Activated CD8-positive, alpha-beta T cell treated with anti-CD3 and anti-CD28 coated beads for 36 hours (primary cell): ENCODE measurements at regions of chr19 and their contacts with region 1.

Region 1: GRCh38 chr19:42108527-42109389 is 23.5 kb downstream of the POU2F2 start:
- DNase-seq: peak; percentile 95
- ATAC-seq: peak; percentile 99
- H3K4me3 Mint-ChIP-seq: no peak overlapping the region
- H3K27ac Mint-ChIP-seq: peak overlapping the region; percentile 44
- H3K4me1 Mint-ChIP-seq: peaks cover 50% of the 10 kb centered on the region
- H3K27me3 Mint-ChIP-seq: no peaks in the 10 kb centered on the region
- CTCF ChIP-seq: peak; percentile 100

Region 2: DNA sequence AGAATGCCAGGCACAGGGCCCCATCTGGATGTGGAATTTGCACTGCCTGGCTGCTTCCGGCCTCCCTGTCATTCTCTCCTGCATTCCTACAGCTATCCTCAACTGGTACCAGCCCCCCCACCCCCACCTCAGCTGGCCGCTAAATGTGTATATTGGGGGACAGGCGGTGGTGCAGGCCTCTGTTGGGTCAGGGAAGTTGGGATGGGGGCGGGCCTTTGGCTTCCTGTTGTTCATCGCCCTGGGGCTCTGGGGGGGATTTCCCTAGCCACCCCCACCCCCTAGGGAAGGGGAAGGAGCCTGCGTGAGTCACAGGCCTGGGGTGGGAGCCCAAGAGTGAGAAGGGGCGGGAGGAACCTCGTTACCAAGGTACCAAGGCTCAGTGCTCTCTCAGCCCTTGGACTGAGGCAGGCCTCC is 12.9 kb after region 1 on chr19:
- CTCF ChIA-PET with region 1: interaction called, 112 read pairs
- POLR2A ChIA-PET with region 1: interaction called, 4 read pairs
- intact Hi-C with region 1: no loop called
- DNase-seq: peak; percentile 93
- ATAC-seq: peak; percentile 69
- H3K4me3 Mint-ChIP-seq: peak overlapping the region; percentile 78
- H3K27ac Mint-ChIP-seq: peak overlapping the region; percentile 96
- H3K4me1 Mint-ChIP-seq: peaks cover 68% of the 10 kb centered on the region
- H3K27me3 Mint-ChIP-seq: no peaks in the 10 kb centered on the region
- CTCF ChIP-seq: no peak

Region 3: DNA sequence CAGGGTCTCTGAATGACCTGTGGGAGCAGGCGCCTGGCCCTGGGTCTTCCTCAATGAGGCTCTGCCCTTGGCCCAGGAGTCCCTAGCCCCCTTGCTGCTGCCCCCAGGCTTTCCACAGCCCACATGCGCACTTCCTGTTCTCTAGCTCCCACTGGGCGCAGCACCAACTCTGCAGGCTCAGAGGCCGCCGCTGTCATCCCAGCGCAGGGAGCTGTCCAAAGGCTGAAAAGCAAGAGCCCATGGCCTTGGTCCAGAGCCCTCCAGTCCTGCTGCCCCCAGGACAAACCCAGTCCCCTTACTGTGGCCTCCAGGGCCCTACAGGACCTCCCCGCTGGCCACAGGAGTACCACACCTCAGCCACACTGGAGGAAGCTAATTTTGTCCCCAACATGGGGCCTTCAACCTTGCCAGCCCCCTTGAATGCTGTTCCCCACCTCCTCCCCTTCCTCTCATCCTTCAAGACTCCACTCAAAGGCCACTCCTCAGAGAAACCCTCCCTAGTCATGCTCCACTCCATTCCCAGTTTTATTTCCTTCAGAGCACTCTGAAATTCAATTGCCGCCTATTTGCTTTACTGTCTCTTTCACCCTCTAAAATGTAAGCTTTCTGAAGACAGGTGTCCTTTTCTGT is 31.5 kb after region 1 on chr19:
- CTCF ChIA-PET with region 1: interaction called, 19 read pairs
- POLR2A ChIA-PET with region 1: no interaction called
- intact Hi-C with region 1: no loop called
- DNase-seq: peak; percentile 59
- ATAC-seq: peak; percentile 79
- H3K4me3 Mint-ChIP-seq: no peak overlapping the region
- H3K27ac Mint-ChIP-seq: no peak overlapping the region
- H3K4me1 Mint-ChIP-seq: peaks cover 5% of the 10 kb centered on the region
- H3K27me3 Mint-ChIP-seq: no peaks in the 10 kb centered on the region
- CTCF ChIP-seq: no peak

Region 4: GRCh38 chr19:42184401-42184861 is 75.7 kb after region 1 on chr19:
- CTCF ChIA-PET with region 1: interaction called, 42 read pairs
- POLR2A ChIA-PET with region 1: no interaction called
- intact Hi-C with region 1: loop called (anchors 1 kb)
- DNase-seq: peak; percentile 83
- ATAC-seq: peak; percentile 85
- H3K4me3 Mint-ChIP-seq: no peak overlapping the region
- H3K27ac Mint-ChIP-seq: peak overlapping the region; percentile 36
- H3K4me1 Mint-ChIP-seq: peaks cover 21% of the 10 kb centered on the region
- H3K27me3 Mint-ChIP-seq: no peaks in the 10 kb centered on the region
- CTCF ChIP-seq: peak; percentile 96